ENCODE measurements at regions of chr15 and their contacts with region 1.

Region 1: DNA sequence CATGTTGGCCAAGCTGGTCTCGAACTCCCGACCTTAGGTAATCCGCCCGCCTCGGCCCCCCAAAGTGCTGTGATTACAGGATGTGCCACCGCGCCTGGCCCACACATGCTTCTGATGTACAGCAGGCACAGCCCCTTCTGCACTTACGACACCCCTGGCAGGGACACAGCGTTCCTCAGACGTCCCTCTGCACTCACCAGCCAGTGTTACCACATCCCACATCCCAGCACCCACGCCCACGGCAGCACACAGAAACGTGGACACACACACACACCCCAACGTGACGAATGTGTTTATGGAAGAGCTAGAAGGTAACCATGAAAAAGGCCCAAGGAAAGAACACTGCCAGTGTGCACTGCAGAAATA is 576 bp upstream of the RPAP1 start:
- DNase-seq: peak; percentile 34
- H3K4me3 ChIP-seq: peak overlapping the region; percentile 69; the same call in 1 of the 2 replicates
- H3K27me3 ChIP-seq: no peaks in the 10 kb centered on the region
- CTCF ChIP-seq: no peak

Region 2: GRCh38 chr15:41493205-41493901 is 51.3 kb before region 1 on chr15 and contains the start of gene ITPKA:
- CTCF ChIA-PET with region 1: no interaction called
- POLR2A ChIA-PET with region 1: no interaction called
- DNase-seq: no peak
- H3K4me3 ChIP-seq: peak within 1 kb of the TSS; percentile 57
- H3K27me3 ChIP-seq: peaks cover 7% of the 10 kb centered on the region
- CTCF ChIP-seq: no peak
- polyA plus RNA-seq, gene ITPKA: 0.44 and 0.59 TPM in 2 replicates

Region 3: GRCh38 chr15:41557673-41558399 is 13.2 kb after region 1 on chr15:
- CTCF ChIA-PET with region 1: interaction called, 12 read pairs
- POLR2A ChIA-PET with region 1: no interaction called
- DNase-seq: peak; percentile 9
- H3K4me3 ChIP-seq: no peak overlapping the region; the same call in 1 of the 2 replicates
- H3K27me3 ChIP-seq: no peaks in the 10 kb centered on the region
- CTCF ChIP-seq: peak; percentile 94

Region 4: GRCh38 chr15:41660235-41661077 is 115.8 kb after region 1 on chr15 and contains the start of gene MGA:
- CTCF ChIA-PET with region 1: no interaction called
- POLR2A ChIA-PET with region 1: interaction called, 15 read pairs
- DNase-seq: peak; percentile 54
- H3K4me3 ChIP-seq: peak within 1 kb of the TSS; percentile 55
- H3K27me3 ChIP-seq: no peaks in the 10 kb centered on the region; the same call in 1 of the 2 replicates
- CTCF ChIP-seq: 0 out of 2 replicates have a peak, but pooled peaks have one; percentile 16
- polyA plus RNA-seq, gene MGA: 4.7 and 8.0 TPM in 2 replicates

Region 5: GRCh38 chr15:41703120-41703519 is 158.5 kb after region 1 on chr15:
- CTCF ChIA-PET with region 1: no interaction called
- POLR2A ChIA-PET with region 1: interaction called, 18 read pairs
- DNase-seq: no peak
- H3K4me3 ChIP-seq: no peak overlapping the region
- H3K27me3 ChIP-seq: no peaks in the 10 kb centered on the region
- CTCF ChIP-seq: no peak

Measured in BJ (cell line).